Panc1 (cell line): ENCODE measurements at regions of chr4 and their contacts with region 1.

Region 1: GRCh38 chr4:141133146-141133998 is at the start of gene RNF150:
- DNase-seq: peak; percentile 2
- ATAC-seq: peak; percentile 88
- H3K4me3 ChIP-seq: peak within 1 kb of the TSS; percentile 43 to 52
- H3K27ac ChIP-seq: no peak within 1 kb of the TSS
- H3K4me1 ChIP-seq: no peaks in the 10 kb centered on the region
- H3K27me3 ChIP-seq: peaks cover 2% of the 10 kb centered on the region; the same call in 1 of the 2 replicates
- CTCF ChIP-seq: peak; percentile 78
- total RNA-seq, gene RNF150: 1.3 TPM

Region 2: GRCh38 chr4:140884431-140885058 is 248.8 kb before region 1 on chr4:
- CTCF ChIA-PET with region 1: interaction called, 22 read pairs
- POLR2A ChIA-PET with region 1: no interaction called
- in situ Hi-C with region 1: no loop called
- intact Hi-C with region 1: no loop called
- DNase-seq: peak; percentile 45
- ATAC-seq: peak; percentile 81; the same call in 1 of the 2 replicates
- H3K4me3 ChIP-seq: no peak overlapping the region
- H3K27ac ChIP-seq: no peak overlapping the region
- H3K4me1 ChIP-seq: no peaks in the 10 kb centered on the region
- H3K27me3 ChIP-seq: no peaks in the 10 kb centered on the region
- CTCF ChIP-seq: peak; percentile 80